Heart right ventricle (tissue), 16 donors: ENCODE measurements at regions of chr12 and their contacts with region 1.

Region 1: DNA sequence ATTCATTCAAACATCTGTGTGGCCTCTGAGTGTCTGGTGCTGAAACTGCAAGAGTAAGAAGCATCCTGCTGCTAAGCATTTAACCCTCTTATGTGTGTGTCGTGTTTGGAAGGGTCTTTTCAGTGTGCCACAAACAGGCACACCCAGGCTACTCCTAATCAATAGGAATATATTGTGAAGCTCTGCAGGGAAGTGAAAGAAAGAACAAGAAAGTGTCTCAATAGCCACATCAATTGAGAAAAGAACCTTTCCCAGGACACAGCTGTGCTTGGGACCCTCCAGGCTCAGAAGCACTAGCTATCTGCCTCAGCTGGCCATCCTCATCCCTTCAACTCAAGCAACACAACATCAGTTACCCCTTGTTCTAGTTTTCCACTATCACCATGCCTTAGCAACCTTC is 13.4 kb upstream of the KRAS start:
- DNase-seq: no peak
- ATAC-seq: no peak
- H3K4me3 ChIP-seq: no peak overlapping the region
- H3K27ac ChIP-seq: no peak overlapping the region
- H3K4me1 ChIP-seq: no peaks in the 10 kb centered on the region
- H3K27me3 ChIP-seq: no peaks in the 10 kb centered on the region
- CTCF ChIP-seq: no peak

Region 2: DNA sequence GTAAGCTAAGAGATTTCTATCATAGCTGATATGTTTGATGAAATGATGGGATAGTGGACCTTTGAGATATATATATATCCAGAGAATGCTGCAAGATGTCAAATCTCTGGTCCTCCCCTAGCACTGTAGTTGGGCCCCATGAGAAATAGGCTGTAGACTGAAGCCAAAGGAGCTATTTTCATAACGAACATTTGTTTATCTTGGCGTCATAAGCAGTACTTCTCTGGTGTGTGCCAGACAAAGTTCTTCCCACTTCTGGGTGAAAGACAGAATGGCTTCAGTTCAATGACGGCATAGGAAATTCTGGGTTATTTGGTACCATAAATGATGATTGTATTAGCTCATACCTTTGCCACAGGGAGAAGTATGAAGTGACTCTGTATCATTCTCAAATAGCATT is 1848.9 kb before region 1 on chr12:
- intact Hi-C with region 1: loop called in 1 of 10 experiments (anchors 5 kb)
- DNase-seq: no peak
- ATAC-seq: peak in 2 of 8 donors; percentile 20 to 38
- H3K4me3 ChIP-seq: no peak overlapping the region
- H3K27ac ChIP-seq: no peak overlapping the region
- H3K4me1 ChIP-seq: no peaks in the 10 kb centered on the region
- H3K27me3 ChIP-seq: no peaks in the 10 kb centered on the region
- CTCF ChIP-seq: no peak

Region 3: GRCh38 chr12:25213338-25213737 is 50.8 kb before region 1 on chr12:
- intact Hi-C with region 1: no loop called
- DNase-seq: no peak
- ATAC-seq: no peak
- H3K4me3 ChIP-seq: no peak overlapping the region
- H3K27ac ChIP-seq: no peak overlapping the region
- H3K4me1 ChIP-seq: peaks cover 0 to 7% (median 0%) of the 10 kb centered on the region in 9 donors
- H3K27me3 ChIP-seq: no peaks in the 10 kb centered on the region
- CTCF ChIP-seq: no peak

Region 4: GRCh38 chr12:25701290-25701689 is 437.2 kb after region 1 on chr12:
- intact Hi-C with region 1: no loop called
- DNase-seq: no peak
- ATAC-seq: no peak
- H3K4me3 ChIP-seq: no peak overlapping the region
- H3K27ac ChIP-seq: no peak overlapping the region
- H3K4me1 ChIP-seq: no peaks in the 10 kb centered on the region
- H3K27me3 ChIP-seq: no peaks in the 10 kb centered on the region
- CTCF ChIP-seq: no peak